ENCODE measurements at regions of chr5 and their contacts with region 1.

Region 1: GRCh38 chr5:1230551-1230950 is 5.4 kb downstream of the SLC6A18 start:
- DNase-seq: no peak
- H3K4me3 ChIP-seq: no peak overlapping the region
- H3K27ac ChIP-seq: no peak overlapping the region
- H3K4me1 ChIP-seq: no peaks in the 10 kb centered on the region; the same call in 1 of the 2 replicates
- H3K27me3 ChIP-seq: peaks cover 98% of the 10 kb centered on the region
- CTCF ChIP-seq: no peak

Region 2: GRCh38 chr5:1304033-1304432 is 73.5 kb after region 1 on chr5:
- CTCF ChIA-PET with region 1: no interaction called
- POLR2A ChIA-PET with region 1: no interaction called
- intact Hi-C with region 1: no loop called
- DNase-seq: no peak
- H3K4me3 ChIP-seq: no peak overlapping the region
- H3K27ac ChIP-seq: no peak overlapping the region
- H3K4me1 ChIP-seq: no peaks in the 10 kb centered on the region
- H3K27me3 ChIP-seq: peaks cover 47% of the 10 kb centered on the region
- CTCF ChIP-seq: no peak

Region 3: DNA sequence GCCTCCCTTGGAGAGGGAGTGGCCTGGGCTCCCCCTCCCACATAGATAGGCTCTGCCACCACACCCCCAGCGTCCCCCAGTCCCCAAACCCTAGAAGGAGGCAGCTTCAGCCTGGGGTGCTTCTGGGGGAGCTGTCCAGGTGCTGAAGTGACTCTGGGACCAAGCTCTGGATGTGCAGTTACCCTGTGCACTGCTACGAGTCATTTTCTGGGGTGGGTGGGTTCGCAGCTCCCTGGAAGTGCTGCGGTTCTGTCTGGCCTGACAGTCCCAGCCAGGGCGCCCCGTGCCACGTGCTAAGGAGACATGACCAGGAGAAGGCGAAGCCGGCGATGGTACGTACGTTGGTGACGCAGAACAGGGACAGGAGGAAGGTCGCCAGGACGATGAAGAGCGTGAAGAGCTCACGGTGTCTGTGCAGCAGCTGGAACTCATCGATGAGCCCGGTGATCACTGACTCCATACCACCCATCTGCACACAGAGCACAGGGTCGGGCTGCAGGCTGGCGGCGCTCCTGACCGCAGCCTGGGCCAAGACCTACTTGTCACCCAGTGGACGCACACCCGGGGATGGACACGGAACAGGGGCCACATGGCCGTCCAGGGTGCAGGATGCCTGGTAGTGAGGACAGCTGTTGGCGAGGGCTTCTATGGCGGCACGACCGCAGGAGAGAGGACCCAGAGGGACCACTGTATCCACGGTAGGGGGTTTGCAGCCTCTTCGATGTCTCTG is 179.0 kb after region 1 on chr5:
- CTCF ChIA-PET with region 1: no interaction called
- POLR2A ChIA-PET with region 1: no interaction called
- intact Hi-C with region 1: no loop called
- DNase-seq: peak in 1 of 2 experiments; percentile 57
- H3K4me3 ChIP-seq: no peak overlapping the region
- H3K27ac ChIP-seq: no peak overlapping the region
- H3K4me1 ChIP-seq: no peaks in the 10 kb centered on the region
- H3K27me3 ChIP-seq: peaks cover 98% of the 10 kb centered on the region
- CTCF ChIP-seq: no peak

Region 4: DNA sequence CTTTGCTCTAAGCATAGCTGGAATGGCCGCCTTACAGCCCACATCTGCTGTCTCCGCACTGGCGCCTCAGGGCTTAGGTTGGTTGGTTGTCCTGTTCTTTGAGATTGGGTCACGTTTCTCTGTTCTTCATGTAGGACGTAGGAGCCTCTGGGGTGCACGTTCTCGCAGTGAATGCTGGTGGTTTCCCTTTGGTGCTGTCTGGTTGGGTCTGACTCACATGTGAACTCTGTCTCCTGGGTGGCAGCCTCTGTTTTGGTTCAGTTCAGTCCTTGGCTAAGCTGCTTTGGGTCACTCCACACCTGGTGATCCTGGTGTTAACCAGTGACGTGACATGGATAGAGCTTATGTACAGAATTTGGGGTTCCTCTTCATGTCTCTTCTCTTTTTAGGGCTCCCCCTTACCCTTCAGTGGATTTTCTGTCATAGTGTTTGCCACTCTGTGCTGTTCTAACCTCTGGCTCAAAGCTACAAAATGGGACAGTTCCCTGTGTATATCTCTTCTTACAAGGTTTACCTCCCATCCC is 305.8 kb after region 1 on chr5:
- CTCF ChIA-PET with region 1: interaction called, 12 read pairs
- POLR2A ChIA-PET with region 1: no interaction called
- intact Hi-C with region 1: no loop called
- DNase-seq: no peak
- H3K4me3 ChIP-seq: no peak overlapping the region
- H3K27ac ChIP-seq: no peak overlapping the region
- H3K4me1 ChIP-seq: no peaks in the 10 kb centered on the region
- H3K27me3 ChIP-seq: no peaks in the 10 kb centered on the region
- CTCF ChIP-seq: no peak